AG04449 (cell line): ENCODE measurements at regions of chr4 and their contacts with region 1.

Region 1: GRCh38 chr4:77600521-77601451 is 4.8 kb upstream of the CXCL13 start:
- DNase-seq: no peak
- H3K4me3 ChIP-seq: no peak overlapping the region
- CTCF ChIP-seq: peak; percentile 76

Region 2: GRCh38 chr4:77367638-77368037 is 233.1 kb before region 1 on chr4:
- CTCF ChIA-PET with region 1: interaction called, 11 read pairs
- POLR2A ChIA-PET with region 1: no interaction called
- DNase-seq: no peak
- H3K4me3 ChIP-seq: no peak overlapping the region
- CTCF ChIP-seq: no peak

Region 3: GRCh38 chr4:77385124-77385969 is 215.4 kb before region 1 on chr4:
- CTCF ChIA-PET with region 1: interaction called, 275 read pairs
- POLR2A ChIA-PET with region 1: no interaction called
- DNase-seq: peak; percentile 3
- H3K4me3 ChIP-seq: no peak overlapping the region
- CTCF ChIP-seq: peak; percentile 81

Region 4: DNA sequence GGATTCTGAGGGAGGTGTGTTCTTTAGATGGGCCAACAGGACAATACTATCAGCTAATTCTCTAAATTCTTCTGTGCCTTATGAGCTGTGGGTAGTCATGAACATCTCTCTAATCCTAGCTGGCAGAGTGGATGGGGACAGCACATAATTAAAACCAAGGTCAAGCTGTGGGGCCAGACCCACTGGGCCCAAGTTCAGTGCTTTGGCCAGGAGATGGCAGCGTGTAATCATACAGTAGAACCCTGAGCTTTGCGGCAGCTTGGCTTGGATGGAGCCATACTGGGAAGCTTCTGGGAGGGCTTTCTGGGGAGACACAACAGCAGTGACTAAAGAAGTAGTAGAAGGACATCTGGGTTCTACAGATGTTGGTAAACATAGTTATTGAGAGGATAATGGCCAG is 135.5 kb before region 1 on chr4:
- CTCF ChIA-PET with region 1: interaction called, 44 read pairs
- POLR2A ChIA-PET with region 1: no interaction called
- DNase-seq: no peak
- H3K4me3 ChIP-seq: no peak overlapping the region
- CTCF ChIP-seq: peak; percentile 42

Region 5: DNA sequence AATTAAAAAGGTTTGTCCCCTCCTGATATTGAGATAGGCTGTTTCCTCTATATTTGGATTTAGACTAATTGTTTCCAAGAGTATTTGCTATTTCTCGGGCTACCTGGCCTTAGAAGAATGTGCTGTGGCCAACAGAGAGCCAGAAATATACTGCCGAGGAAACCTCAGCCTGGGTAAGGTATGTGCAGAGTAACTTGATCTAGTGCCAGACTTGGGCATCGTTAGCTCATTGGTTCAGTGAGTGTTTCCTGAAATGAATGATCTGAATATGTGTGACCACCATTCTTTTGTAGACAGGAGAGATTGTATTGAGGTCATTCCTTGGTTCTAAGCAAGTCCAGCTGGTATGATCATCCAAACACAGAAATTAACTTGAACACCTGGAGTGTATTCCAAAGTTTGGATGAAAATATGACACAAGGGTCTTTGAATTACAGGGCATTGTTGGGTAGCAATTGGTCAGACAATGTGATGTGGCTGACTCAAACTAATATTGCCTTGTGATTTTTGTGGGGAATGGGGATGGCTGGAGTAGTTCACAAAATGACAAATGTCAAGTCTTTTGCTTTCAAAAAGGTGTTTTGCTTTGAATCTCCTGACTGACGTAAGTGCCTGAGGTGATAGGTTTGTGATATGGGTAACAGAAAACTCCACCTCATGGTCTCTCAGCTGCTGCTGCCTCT is 95.4 kb before region 1 on chr4:
- CTCF ChIA-PET with region 1: no interaction called
- POLR2A ChIA-PET with region 1: no interaction called
- DNase-seq: no peak
- H3K4me3 ChIP-seq: no peak overlapping the region
- CTCF ChIP-seq: no peak

Region 6: DNA sequence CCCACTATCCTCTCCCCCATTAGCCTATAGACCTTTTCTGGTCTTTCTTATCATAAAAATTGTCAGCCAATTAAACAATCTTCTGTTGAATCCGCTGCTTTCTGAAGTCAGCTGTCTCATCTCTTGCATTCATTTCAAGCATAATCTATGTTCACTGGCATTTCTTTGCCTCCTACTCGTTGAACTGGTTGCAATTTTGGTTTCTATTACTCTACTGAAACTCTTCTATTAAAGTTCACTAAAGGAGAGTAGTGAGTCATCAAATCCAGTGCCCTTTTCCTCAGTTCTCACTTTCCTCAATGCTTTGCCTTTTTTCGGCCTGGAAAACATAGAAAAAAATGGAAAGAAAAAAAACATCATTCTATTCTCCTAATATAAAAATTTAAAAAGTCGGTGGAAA is 19.1 kb before region 1 on chr4:
- CTCF ChIA-PET with region 1: interaction called, 24 read pairs
- POLR2A ChIA-PET with region 1: no interaction called
- DNase-seq: no peak
- H3K4me3 ChIP-seq: no peak overlapping the region
- CTCF ChIP-seq: no peak

Region 7: DNA sequence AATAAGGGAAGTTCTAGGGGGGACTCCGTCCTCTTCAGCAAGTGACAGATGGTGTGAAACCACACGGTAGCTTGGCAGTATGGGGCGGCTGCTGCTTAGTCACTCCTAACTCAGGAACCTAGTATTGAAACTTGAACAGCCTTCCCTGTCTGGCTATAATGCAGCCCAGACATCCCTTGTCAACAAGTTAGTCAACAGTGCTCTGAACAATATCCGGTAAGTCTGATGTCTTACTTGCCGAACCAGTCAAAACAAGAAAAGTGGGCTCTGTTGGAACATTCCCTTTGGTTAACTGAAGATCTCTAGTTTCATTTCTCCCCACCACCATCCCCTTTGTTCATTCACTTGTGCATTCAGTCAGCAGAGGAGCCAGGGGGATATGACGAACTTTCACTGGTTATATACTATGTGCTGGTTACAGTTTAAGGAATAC is 13.8 kb before region 1 on chr4:
- CTCF ChIA-PET with region 1: interaction called, 24 read pairs
- POLR2A ChIA-PET with region 1: no interaction called
- DNase-seq: no peak
- H3K4me3 ChIP-seq: no peak overlapping the region
- CTCF ChIP-seq: no peak

Region 8: GRCh38 chr4:77697860-77698590 is 97.2 kb after region 1 on chr4:
- CTCF ChIA-PET with region 1: interaction called, 22 read pairs
- POLR2A ChIA-PET with region 1: no interaction called
- DNase-seq: peak; percentile 24
- H3K4me3 ChIP-seq: no peak overlapping the region; the same call in 1 of the 2 replicates
- CTCF ChIP-seq: peak; percentile 56

Region 9: GRCh38 chr4:77711469-77711868 is 110.7 kb after region 1 on chr4:
- CTCF ChIA-PET with region 1: no interaction called
- POLR2A ChIA-PET with region 1: no interaction called
- DNase-seq: no peak
- H3K4me3 ChIP-seq: no peak overlapping the region
- CTCF ChIP-seq: no peak